Motor neuron (in vitro differentiated cells): ENCODE measurements at regions of chr6 and their contacts with region 1.

Region 1: DNA sequence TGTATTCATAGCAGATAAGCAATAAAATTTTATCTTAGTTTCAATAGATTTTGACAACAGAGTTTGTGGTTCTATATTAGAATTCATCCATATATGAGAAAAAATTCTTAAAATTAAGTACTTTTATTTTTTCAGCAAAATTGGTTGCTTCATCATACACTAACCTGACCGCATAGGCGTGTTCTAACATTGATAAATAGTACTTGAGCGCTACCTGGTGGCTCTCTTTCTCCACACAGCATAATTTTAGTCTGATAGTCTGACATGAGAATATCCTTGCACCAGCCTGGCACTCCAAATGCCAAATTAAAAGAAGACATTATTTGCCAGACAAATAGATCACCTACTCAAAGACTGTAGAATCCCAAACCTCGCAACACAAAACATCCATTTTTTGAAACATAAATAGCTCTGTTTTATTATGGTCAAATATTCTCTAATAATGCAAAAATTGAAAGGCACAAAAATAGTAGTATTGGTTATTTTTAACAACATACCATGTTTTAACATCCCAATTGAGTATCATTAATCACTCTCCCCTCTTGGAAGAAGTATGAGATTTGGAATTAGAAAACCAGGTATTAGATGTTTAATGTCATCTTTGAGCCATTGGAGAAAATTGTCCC is 33.0 kb upstream of the FILIP1 start:
- ATAC-seq: peak; percentile 64 to 91 (median 72)
- H3K4me3 ChIP-seq: no peak overlapping the region
- H3K27ac ChIP-seq: no peak overlapping the region
- H3K4me1 ChIP-seq: no peaks in the 10 kb centered on the region

Region 2: GRCh38 chr6:75284632-75285286 is 241.9 kb before region 1 on chr6 and contains the start of gene TMEM30A:
- in situ Hi-C with region 1: loop called in 4 of 9 experiments (anchors 25 kb)
- ATAC-seq: peak; percentile 94 to 97 (median 95)
- H3K4me3 ChIP-seq: peak within 1 kb of the TSS; percentile 75 to 95 (median 81)
- H3K27ac ChIP-seq: peak within 1 kb of the TSS; percentile 88 to 93
- H3K4me1 ChIP-seq: peaks cover 17 to 28% of the 10 kb centered on the region in 2 donors
- total RNA-seq, gene TMEM30A: 56.9 to 133 (median 70.1) TPM

Region 3: GRCh38 chr6:75317503-75318206 is 209.0 kb before region 1 on chr6:
- in situ Hi-C with region 1: loop called in 3 of 9 experiments (anchors 25 kb)
- ATAC-seq: no peak
- H3K4me3 ChIP-seq: no peak overlapping the region
- H3K27ac ChIP-seq: no peak overlapping the region
- H3K4me1 ChIP-seq: no peaks in the 10 kb centered on the region